ENCODE measurements at regions of chr2 and their contacts with region 1.

Region 1: GRCh38 chr2:179715196-179715595 is 146.2 kb downstream of the ZNF385B start:
- DNase-seq: no peak
- H3K4me3 ChIP-seq: no peak overlapping the region
- H3K27me3 ChIP-seq: no peaks in the 10 kb centered on the region
- CTCF ChIP-seq: no peak

Region 2: DNA sequence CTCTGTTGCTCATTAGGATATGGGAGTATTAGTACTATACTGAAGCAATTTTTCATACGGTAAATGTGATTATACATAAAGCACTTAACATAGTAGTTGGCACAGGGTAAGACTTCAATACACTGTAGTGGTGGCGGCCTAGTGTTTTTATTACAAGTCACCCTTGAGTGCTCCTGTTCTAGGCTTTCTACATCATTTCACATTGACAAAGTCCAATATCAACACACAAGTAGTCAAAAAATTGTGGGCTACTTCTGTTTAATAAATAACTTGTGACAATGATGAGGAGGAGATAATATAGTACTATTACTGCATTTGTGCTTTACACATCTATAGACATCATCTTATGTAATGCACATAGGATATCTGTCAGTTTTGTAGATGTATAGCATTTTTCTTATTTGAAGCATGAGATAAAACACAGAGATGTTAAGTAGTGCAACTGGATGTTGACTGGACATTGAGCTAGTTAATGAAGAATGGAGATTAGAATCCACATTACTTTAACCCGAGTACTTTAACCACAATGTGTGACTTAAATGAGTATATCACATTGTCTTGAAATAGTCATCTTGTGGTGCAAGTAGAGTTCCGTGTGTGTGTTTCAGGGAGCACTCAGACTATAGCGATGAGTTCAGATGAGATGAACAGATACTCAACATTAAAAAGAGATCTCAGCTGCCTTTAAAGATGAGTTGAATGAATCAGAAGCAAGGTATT is 11.4 kb after region 1 on chr2:
- CTCF ChIA-PET with region 1: interaction called, 11 read pairs
- POLR2A ChIA-PET with region 1: no interaction called
- DNase-seq: no peak
- H3K4me3 ChIP-seq: no peak overlapping the region
- H3K27me3 ChIP-seq: no peaks in the 10 kb centered on the region
- CTCF ChIP-seq: no peak

Region 3: DNA sequence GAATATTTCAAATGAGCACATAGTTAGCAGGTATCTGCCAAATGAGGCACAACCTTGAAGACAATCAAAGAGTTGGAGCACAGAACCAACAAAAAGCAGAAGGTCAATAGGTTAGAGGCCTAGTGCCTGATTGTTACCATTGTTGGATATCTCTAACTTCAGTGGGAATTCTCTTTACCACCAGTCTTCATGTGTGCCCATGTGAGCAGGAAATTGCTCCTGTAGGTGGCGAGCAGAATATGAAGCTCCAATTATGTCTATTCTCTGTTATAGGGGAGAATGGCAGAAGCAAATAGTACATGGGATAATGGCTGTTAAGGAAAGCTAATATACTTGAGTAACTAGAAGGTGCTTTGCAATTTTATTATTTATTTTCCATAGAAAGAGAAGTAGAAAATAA is 161.1 kb after region 1 on chr2:
- CTCF ChIA-PET with region 1: no interaction called
- POLR2A ChIA-PET with region 1: no interaction called
- DNase-seq: no peak
- H3K4me3 ChIP-seq: no peak overlapping the region
- H3K27me3 ChIP-seq: no peaks in the 10 kb centered on the region
- CTCF ChIP-seq: 0 out of 2 replicates have a peak, but pooled peaks have one; percentile 10

Region 4: DNA sequence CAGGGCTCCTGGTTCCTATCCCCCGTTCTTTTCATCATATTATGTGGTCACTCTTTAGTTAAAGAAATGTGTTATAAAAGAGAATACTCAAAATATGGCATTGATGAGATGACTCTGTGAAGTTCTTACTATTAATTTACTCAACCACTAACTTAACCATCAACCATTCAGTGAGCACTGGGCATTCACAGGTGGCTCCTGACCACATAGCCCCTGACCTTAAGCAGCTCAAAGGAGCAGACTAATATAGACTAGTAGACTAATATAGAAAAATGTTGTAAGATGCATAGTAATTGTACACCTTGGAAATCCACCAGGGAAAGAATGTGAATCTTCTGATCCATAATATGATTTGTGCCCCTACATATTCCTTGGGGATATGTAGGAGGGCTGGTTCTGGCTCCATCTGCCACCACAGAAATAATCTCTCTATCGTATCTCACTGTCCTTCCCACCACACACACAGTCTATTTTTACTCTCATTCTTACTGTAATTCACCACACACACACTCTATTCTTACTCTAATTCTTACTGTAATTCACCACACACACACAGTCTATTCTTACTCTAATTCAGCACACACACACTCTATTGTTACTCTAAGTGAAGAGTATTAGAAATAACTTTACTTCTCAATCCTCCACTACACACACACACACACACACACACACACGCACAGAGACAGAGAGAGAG is 1553.1 kb after region 1 on chr2:
- CTCF ChIA-PET with region 1: no interaction called
- POLR2A ChIA-PET with region 1: no interaction called
- DNase-seq: no peak
- H3K4me3 ChIP-seq: no peak overlapping the region
- H3K27me3 ChIP-seq: no peaks in the 10 kb centered on the region
- CTCF ChIP-seq: no peak

Measured in BJ (cell line).